Naive thymus-derived CD4-positive, alpha-beta T cell (primary cell): ENCODE measurements at regions of chr10 and their contacts with region 1.

Region 1: DNA sequence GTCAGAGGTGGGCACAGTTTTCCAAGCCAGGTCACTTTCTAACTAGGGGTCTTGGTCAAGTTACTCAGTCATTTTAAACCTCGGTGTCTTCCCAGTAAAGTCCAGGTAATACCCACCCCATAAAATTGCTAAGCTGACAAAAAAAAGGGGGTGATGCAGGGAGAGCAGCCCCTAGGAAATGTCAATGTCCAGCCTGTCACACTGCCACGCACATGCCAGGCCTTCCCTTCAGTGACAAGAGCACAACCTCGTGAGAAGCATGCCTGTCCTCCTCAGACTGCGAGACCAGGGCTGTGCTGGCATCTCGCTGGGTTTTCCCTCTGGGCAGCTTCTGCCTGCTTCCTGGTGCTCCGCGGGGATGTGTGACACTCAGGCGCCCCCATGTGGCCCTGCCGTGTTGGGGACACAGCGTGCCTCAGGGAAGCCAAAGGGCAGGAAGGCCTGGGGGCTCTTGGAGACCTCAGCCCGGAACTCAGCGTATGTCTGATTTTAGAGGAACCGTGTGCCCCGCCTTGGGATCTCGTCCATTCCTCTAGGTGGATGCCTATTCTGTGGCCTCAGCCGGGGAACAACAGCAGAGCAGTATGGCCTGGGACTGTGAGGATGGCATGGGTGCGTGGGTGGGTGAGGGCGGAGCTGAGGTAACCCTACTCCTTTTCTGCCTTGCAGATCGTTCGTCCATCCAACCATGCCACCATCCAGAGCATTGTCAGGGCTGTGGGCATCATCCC is 10.2 kb upstream of the GDF2 start:
- DNase-seq: peak; percentile 70 to 86 (median 79)
- ATAC-seq: peak; percentile 90
- H3K4me3 ChIP-seq: peak overlapping the region; percentile 41
- H3K4me3 Mint-ChIP-seq: peak overlapping the region; percentile 43 to 82 (median 70)
- H3K27ac ChIP-seq: peak overlapping the region; percentile 61
- H3K27ac Mint-ChIP-seq: peak overlapping the region; percentile 71 to 94 (median 88)
- H3K4me1 ChIP-seq: peaks cover 14 to 31% of the 10 kb centered on the region in 2 donors
- H3K4me1 Mint-ChIP-seq: peaks cover 11 to 44% (median 38%) of the 10 kb centered on the region in 7 donors
- H3K27me3 ChIP-seq: no peaks in the 10 kb centered on the region
- H3K27me3 Mint-ChIP-seq: peaks cover 0 to under 1% (median 0%) of the 10 kb centered on the region in 5 donors

Region 2: GRCh38 chr10:47024399-47025252 is 287.5 kb before region 1 on chr10:
- CTCF ChIA-PET with region 1: interaction called, 93 read pairs
- POLR2A ChIA-PET with region 1: interaction called, 3 read pairs
- intact Hi-C with region 1: loop called in 1 of 2 experiments (anchors 1 kb)
- DNase-seq: peak; percentile 43 to 73 (median 60)
- ATAC-seq: peak; percentile 76
- H3K4me3 ChIP-seq: no peak overlapping the region
- H3K4me3 Mint-ChIP-seq: no peak overlapping the region
- H3K27ac ChIP-seq: no peak overlapping the region
- H3K27ac Mint-ChIP-seq: peak overlapping the region in 1 of 9 donors; percentile 53
- H3K4me1 ChIP-seq: no peaks in the 10 kb centered on the region
- H3K4me1 Mint-ChIP-seq: peaks cover 0 to 7% (median 5%) of the 10 kb centered on the region in 7 donors
- H3K27me3 ChIP-seq: no peaks in the 10 kb centered on the region
- H3K27me3 Mint-ChIP-seq: peaks cover 0 to 7% (median 4%) of the 10 kb centered on the region in 5 donors

Region 3: GRCh38 chr10:47165711-47166524 is 146.2 kb before region 1 on chr10:
- CTCF ChIA-PET with region 1: interaction called, 26 read pairs
- POLR2A ChIA-PET with region 1: interaction called, 12 read pairs
- intact Hi-C with region 1: loop called in 1 of 2 experiments (anchors 1 kb)
- DNase-seq: peak; percentile 41 to 80 (median 68)
- ATAC-seq: peak; percentile 82
- H3K4me3 ChIP-seq: peak overlapping the region; percentile 71
- H3K4me3 Mint-ChIP-seq: peak overlapping the region; percentile 79 to 93 (median 92)
- H3K27ac ChIP-seq: peak overlapping the region; percentile 77
- H3K27ac Mint-ChIP-seq: peak overlapping the region; percentile 84 to 100 (median 99)
- H3K4me1 ChIP-seq: peaks cover 12 to 23% of the 10 kb centered on the region in 2 donors
- H3K4me1 Mint-ChIP-seq: peaks cover 19 to 43% (median 28%) of the 10 kb centered on the region in 7 donors
- H3K27me3 ChIP-seq: no peaks in the 10 kb centered on the region
- H3K27me3 Mint-ChIP-seq: peaks cover 0 to 9% (median 0%) of the 10 kb centered on the region in 5 donors

Region 4: GRCh38 chr10:47207281-47207615 is 104.8 kb before region 1 on chr10:
- CTCF ChIA-PET with region 1: no interaction called
- POLR2A ChIA-PET with region 1: interaction called, 13 read pairs
- intact Hi-C with region 1: loop called in 1 of 2 experiments (anchors 1 kb)
- DNase-seq: peak in 7 of 9 donors; percentile 18 to 38 (median 25)
- ATAC-seq: peak; percentile 66
- H3K4me3 ChIP-seq: peak overlapping the region; percentile 28
- H3K4me3 Mint-ChIP-seq: peak overlapping the region; percentile 63 to 84 (median 74)
- H3K27ac ChIP-seq: peak overlapping the region; percentile 47
- H3K27ac Mint-ChIP-seq: peak overlapping the region; percentile 70 to 99 (median 96)
- H3K4me1 ChIP-seq: peaks cover 25 to 55% of the 10 kb centered on the region in 2 donors
- H3K4me1 Mint-ChIP-seq: peaks cover 23 to 79% (median 70%) of the 10 kb centered on the region in 7 donors
- H3K27me3 ChIP-seq: no peaks in the 10 kb centered on the region
- H3K27me3 Mint-ChIP-seq: no peaks in the 10 kb centered on the region

Region 5: GRCh38 chr10:47300429-47300931 is 11.6 kb before region 1 on chr10:
- CTCF ChIA-PET with region 1: interaction called, 8 read pairs
- POLR2A ChIA-PET with region 1: interaction called, 8 read pairs
- intact Hi-C with region 1: loop called in 1 of 2 experiments (anchors 1 kb)
- DNase-seq: no peak
- ATAC-seq: peak; percentile 38
- H3K4me3 ChIP-seq: peak overlapping the region; percentile 39
- H3K4me3 Mint-ChIP-seq: peak overlapping the region; percentile 52 to 90 (median 86)
- H3K27ac ChIP-seq: no peak overlapping the region
- H3K27ac Mint-ChIP-seq: peak overlapping the region in 3 of 9 donors; percentile 32 to 74 (median 71)
- H3K4me1 ChIP-seq: peaks cover 0 to 13% of the 10 kb centered on the region in 2 donors
- H3K4me1 Mint-ChIP-seq: peaks cover 6 to 47% (median 27%) of the 10 kb centered on the region in 7 donors
- H3K27me3 ChIP-seq: no peaks in the 10 kb centered on the region
- H3K27me3 Mint-ChIP-seq: peaks cover 0 to 60% (median 5%) of the 10 kb centered on the region in 5 donors

Region 6: GRCh38 chr10:48684792-48685623 is 1372.9 kb after region 1 on chr10 and contains the start of gene WDFY4:
- CTCF ChIA-PET with region 1: no interaction called
- POLR2A ChIA-PET with region 1: no interaction called
- intact Hi-C with region 1: no loop called
- DNase-seq: no peak
- ATAC-seq: peak; percentile 83
- H3K4me3 ChIP-seq: no peak within 1 kb of the TSS
- H3K4me3 Mint-ChIP-seq: no peak within 1 kb of the TSS
- H3K27ac ChIP-seq: no peak within 1 kb of the TSS
- H3K27ac Mint-ChIP-seq: no peak within 1 kb of the TSS
- H3K4me1 ChIP-seq: no peaks in the 10 kb centered on the region
- H3K4me1 Mint-ChIP-seq: peaks cover 0 to 3% (median 0%) of the 10 kb centered on the region in 7 donors
- H3K27me3 ChIP-seq: no peaks in the 10 kb centered on the region
- H3K27me3 Mint-ChIP-seq: peaks cover 3 to 36% (median 15%) of the 10 kb centered on the region in 5 donors
- total RNA-seq, gene WDFY4: 0.56 to 39.3 (median 1.8) TPM